ENCODE measurements at regions of chr14 and their contacts with region 1.

Region 1: GRCh38 chr14:95527387-95528002 is 7.4 kb upstream of the GLRX5 start:
- H3K4me3 ChIP-seq: no peak overlapping the region
- H3K27ac ChIP-seq: no peak overlapping the region
- H3K4me1 ChIP-seq: peaks cover 22% of the 10 kb centered on the region
- CTCF ChIP-seq: no peak

Region 2: DNA sequence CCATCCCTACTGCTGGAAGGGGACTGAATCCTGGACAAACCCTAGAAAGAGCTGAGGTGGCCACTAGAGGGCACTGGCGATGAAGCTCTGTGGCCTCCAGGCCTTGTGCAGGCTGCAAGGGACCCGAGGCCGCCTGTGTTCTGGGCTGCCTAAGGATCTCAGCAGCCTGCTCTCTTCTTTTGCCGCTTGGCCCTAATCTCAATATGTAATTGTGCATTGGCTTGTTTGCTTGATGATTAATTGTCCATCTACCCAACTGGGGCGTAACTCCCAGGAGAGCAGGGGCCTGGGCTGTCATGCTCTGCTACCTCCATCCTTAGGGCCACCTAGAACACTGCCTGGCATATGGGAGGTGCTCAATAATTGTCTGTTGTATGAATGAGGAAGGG is 84.9 kb before region 1 on chr14:
- CTCF ChIA-PET with region 1: interaction called, 104 read pairs
- POLR2A ChIA-PET with region 1: interaction called, 3 read pairs
- H3K4me3 ChIP-seq: no peak overlapping the region
- H3K27ac ChIP-seq: no peak overlapping the region
- H3K4me1 ChIP-seq: no peaks in the 10 kb centered on the region
- CTCF ChIP-seq: peak; percentile 69

Region 3: DNA sequence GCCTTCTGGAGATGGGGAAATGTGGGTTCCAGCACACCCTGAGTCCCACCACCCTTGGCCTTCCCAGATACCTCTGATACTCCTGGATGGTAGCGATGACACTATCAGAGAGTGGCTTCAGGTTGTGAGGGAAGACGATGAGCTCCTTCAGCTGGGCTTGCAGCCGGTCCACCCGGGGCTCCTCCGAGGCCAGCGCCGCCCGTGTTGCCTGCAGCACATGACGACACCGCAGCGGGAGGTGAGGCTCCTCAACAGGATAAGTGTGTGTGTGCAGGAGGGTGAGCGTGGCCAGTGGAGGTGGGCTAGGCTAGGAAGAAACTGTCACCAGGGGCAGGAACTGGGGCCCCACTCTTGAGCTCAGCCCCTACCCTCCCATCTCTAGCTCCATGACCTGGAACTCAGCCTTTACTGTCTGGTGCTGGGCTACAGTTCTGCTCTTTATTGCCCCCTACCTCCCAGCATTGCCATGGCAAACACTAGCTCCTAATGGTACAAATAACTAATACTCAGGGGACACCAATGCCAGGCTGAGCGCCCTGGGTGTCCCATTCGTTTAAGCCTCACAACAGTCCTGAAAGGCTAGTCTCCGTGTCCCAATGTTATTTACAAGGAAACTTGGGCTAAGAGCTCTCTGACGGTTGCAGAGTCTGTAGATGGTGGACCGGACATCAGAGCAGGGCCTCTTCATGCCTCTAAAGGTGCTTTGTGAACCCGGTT is 75.2 kb before region 1 on chr14:
- CTCF ChIA-PET with region 1: interaction called, 18 read pairs
- POLR2A ChIA-PET with region 1: no interaction called
- H3K4me3 ChIP-seq: no peak overlapping the region
- H3K27ac ChIP-seq: no peak overlapping the region
- H3K4me1 ChIP-seq: no peaks in the 10 kb centered on the region
- CTCF ChIP-seq: no peak

Region 4: DNA sequence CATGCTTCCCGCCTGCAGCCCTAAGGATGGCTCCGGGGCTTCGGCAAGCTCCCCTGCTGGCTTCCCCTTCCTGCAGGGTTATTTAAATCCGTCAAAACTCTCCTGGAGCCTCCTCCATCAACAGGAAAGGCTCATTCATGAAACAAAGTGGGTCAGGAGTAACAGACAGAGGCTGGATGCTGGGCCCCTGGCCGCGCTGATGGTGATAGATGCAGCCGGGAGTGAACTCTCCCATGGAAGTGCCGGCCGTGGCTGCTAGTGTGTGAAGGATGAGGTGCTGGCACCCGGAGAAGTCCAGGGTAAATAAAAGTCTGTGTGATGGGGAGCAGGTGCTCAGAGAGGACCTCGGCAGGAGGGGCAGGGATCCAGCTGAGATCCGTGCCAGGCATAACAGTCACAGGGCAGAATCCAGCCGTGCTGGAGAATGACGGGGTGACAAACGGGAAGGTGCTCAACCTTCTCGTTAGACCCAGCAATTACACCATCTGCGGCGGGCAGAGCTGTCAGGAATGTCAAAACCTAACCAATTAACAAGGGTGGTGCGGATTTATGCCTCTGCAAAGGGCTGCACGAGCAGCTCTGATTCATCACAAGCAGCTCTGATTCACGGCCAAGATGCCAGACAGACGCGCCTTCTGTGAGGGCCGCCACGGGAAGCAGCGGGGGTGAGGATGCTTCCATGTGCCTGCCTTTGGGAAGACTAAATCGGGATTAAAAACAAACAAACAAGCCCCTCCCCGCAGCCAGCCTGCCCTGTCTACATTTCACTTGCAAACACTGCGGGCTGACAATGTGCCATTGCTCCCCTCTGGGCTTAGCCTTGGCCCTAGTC is 66.6 kb before region 1 on chr14:
- CTCF ChIA-PET with region 1: interaction called, 13 read pairs
- POLR2A ChIA-PET with region 1: no interaction called
- H3K4me3 ChIP-seq: no peak overlapping the region
- H3K27ac ChIP-seq: no peak overlapping the region
- H3K4me1 ChIP-seq: peaks cover 8% of the 10 kb centered on the region; the same call in 1 of the 2 replicates
- CTCF ChIP-seq: no peak

Region 5: GRCh38 chr14:95483309-95484165 is 44.0 kb before region 1 on chr14:
- CTCF ChIA-PET with region 1: interaction called, 10 read pairs
- POLR2A ChIA-PET with region 1: no interaction called
- H3K4me3 ChIP-seq: no peak overlapping the region
- H3K27ac ChIP-seq: no peak overlapping the region
- H3K4me1 ChIP-seq: peaks cover 3% of the 10 kb centered on the region; the same call in 1 of the 2 replicates
- CTCF ChIP-seq: no peak

Region 6: GRCh38 chr14:95515596-95516552 is 11.6 kb before region 1 on chr14:
- CTCF ChIA-PET with region 1: interaction called, 11 read pairs
- POLR2A ChIA-PET with region 1: interaction called, 3 read pairs
- H3K4me3 ChIP-seq: peak overlapping the region; percentile 42
- H3K27ac ChIP-seq: peak overlapping the region; percentile 41; the same call in 1 of the 2 replicates
- H3K4me1 ChIP-seq: peaks cover 11% of the 10 kb centered on the region
- CTCF ChIP-seq: peak; percentile 85